Sciatic nerve (tissue), 2 donors: ENCODE measurements at regions of chr4 and their contacts with region 1.

Region 1: DNA sequence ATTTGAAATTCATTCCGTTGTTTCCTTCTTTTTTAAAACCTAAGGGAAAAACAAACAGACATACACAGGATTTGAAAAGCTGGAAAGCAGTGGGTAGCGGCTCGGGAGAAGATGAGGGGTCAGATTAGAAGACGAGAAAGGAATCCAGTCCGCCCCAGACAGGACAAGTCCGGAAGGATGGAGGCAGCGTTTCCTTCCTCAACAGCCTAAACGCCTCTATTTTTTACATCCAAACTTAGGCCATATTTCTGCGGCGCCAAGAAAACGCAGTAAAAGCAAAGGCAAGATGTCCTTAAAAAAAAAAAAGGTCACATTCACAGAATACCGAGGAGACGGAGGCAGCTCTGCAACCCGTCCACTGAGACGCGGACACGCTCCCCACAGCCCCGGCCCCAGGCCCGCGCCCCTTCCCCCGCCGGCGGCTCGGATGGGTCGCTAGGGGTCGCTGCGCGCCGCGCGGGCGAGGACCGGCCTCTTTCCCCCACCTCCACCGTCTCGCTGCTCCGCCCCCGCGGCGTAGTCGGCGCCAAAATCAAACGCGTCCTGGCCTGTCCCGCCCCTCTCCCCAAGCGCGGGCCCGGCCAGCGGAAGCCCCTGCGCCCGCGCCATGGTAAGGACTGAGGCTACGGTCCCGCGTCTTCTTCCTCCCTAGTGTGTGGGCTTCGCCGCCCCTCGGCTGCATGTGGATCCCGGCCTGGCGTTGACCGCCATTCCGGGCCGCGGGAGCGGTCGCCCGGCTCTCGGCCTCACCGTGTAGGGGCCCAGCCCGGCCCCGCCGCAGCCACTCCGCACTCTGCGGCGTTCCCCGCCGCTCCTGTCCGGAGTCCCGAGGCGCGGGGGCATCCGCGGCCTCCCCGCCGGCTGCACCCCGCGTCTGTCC is at the start of gene MND1:
- DNase-seq: peak; percentile 92
- ATAC-seq: peak; percentile 93
- total RNA-seq, gene MND1: not detected

Region 2: DNA sequence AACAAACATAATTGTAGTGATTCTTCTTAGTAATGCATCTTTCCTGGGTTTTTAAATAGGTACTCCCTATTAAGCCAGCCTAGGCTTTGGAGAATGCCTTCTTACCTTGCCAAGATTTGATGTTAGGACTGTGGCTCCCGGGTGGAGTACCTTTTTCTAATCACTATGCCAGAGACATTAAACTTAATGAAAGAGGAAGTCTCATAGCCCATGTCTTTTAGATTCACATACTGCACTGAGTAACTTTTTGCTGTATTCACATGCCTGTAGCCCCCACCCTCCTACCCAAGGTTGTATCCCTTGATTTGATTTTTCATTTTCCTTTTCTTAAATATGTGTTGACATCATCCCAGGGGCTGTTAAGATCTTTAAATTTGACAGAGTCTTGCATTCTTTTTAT is 235.5 kb after region 1 on chr4:
- intact Hi-C with region 1: loop called (anchors 2 kb)
- DNase-seq: no peak
- ATAC-seq: no peak